Right ventricle myocardium inferior (tissue), 1 donor: ENCODE measurements at regions of chr2 and their contacts with region 1.

Region 1: DNA sequence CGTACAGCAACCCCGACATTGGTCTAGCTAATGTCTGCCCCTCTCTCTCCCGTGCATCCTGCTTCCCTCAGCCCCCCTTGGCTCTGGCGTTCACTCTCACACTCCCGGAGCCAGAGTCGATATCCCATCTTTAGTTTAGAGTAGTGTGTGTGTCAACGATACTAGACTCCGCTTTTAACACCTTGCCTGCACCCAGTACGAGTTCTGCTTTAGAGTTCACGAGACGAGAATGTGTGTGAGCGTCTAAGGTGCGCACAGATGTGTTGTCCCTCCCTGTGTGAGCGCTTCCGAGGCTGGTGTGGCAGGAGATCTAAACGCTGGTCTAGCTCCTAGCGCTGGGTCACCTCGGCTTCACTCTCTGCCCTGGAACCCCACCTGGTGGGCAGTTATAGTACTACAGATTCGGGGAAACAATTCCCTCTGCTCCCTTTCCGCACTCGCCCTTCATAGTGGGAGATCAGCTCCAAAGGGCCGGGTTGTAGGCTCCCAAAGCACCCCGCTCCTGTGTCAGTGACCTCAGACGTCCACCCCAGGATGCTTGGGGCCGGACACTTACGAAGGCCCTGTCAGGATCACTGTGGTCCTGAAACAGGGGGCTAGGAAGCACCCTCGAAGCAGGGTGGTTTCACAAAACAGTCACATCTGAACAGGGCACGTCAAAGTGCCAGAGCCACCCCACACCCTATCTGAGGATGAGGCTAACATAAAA is 2.6 kb upstream of the CYP26B1 start:
- DNase-seq: peak; percentile 70
- ATAC-seq: peak; percentile 78

Region 2: GRCh38 chr2:71545572-71546274 is 604.6 kb before region 1 on chr2:
- intact Hi-C with region 1: loop called (anchors 1 kb)
- DNase-seq: no peak
- ATAC-seq: peak; percentile 67

Region 3: GRCh38 chr2:71609958-71610357 is 540.4 kb before region 1 on chr2:
- intact Hi-C with region 1: loop called (anchors 5 kb)
- DNase-seq: no peak
- ATAC-seq: no peak

Region 4: GRCh38 chr2:71852141-71852711 is 298.1 kb before region 1 on chr2:
- intact Hi-C with region 1: no loop called
- DNase-seq: peak; percentile 77
- ATAC-seq: peak; percentile 26

Region 5: DNA sequence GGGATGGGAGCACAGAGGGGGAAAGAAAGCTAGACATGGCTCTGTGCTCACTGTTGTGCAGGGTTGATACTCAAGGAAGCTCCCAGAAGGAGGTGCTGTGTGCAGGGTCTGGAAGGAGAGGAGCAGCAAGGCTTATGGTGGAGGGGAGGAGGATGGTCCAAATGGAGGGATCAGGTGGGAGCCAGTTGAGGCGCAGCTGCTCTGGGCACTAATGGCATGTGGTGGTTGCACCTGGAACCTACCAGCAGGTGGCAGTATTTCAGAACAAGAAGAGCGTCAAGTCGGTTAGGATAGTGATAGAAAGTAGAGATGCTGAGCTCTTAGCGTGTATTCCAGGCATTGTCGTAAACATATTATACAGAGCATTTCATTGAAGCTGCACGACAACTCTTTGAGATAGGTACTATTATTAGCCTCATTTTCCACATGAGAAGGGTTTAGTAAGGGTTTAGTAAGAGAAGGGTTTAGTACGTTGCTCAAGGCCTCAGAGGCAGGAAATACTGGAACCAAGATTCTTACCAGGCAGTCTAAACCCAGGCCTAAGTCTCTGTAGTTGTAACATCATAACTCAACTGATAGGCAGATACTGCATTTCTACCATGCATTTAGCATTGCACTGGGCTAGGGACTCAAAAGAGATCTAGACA is 226.3 kb before region 1 on chr2:
- intact Hi-C with region 1: loop called (anchors 1 kb)
- DNase-seq: peak; percentile 75
- ATAC-seq: peak; percentile 74

Region 6: GRCh38 chr2:72579591-72580180 is 429.4 kb after region 1 on chr2:
- intact Hi-C with region 1: loop called (anchors 5 kb)
- DNase-seq: no peak
- ATAC-seq: no peak